HCT116 (cell line): ENCODE measurements at regions of chr6 and their contacts with region 1.

Region 1: GRCh38 chr6:42879372-42880239 is at the start of gene RPL7L1:
- DNase-seq: peak; percentile 83
- ATAC-seq: peak; percentile 90
- H3K4me3 ChIP-seq: peak within 1 kb of the TSS; percentile 86 to 99
- H3K27ac ChIP-seq: peak within 1 kb of the TSS; percentile 79
- H3K4me1 ChIP-seq: peaks cover 0 to 18% of the 10 kb centered on the region in 2 experiments; a peak in 2 of 4 replicates
- H3K27me3 ChIP-seq: no peaks in the 10 kb centered on the region
- CTCF ChIP-seq: no peak
- POLR2A ChIP-seq: peak; percentile 63
- RAD21 ChIP-seq: no peak
- total RNA-seq, gene RPL7L1: 125 TPM

Region 2: GRCh38 chr6:42224222-42224989 is 655.2 kb before region 1 on chr6:
- CTCF ChIA-PET with region 1: no interaction called
- POLR2A ChIA-PET with region 1: no interaction called
- RAD21 ChIA-PET with region 1: no interaction called
- intact Hi-C with region 1: loop called (anchors 10 kb)
- DNase-seq: peak; percentile 97
- ATAC-seq: peak; percentile 62
- H3K4me3 ChIP-seq: peak overlapping the region; percentile 23 to 42
- H3K27ac ChIP-seq: peak overlapping the region; percentile 84
- H3K4me1 ChIP-seq: peaks cover 48 to 85% of the 10 kb centered on the region in 2 experiments
- H3K27me3 ChIP-seq: no peaks in the 10 kb centered on the region
- CTCF ChIP-seq: no peak
- POLR2A ChIP-seq: no peak
- RAD21 ChIP-seq: peak; percentile 23

Region 3: DNA sequence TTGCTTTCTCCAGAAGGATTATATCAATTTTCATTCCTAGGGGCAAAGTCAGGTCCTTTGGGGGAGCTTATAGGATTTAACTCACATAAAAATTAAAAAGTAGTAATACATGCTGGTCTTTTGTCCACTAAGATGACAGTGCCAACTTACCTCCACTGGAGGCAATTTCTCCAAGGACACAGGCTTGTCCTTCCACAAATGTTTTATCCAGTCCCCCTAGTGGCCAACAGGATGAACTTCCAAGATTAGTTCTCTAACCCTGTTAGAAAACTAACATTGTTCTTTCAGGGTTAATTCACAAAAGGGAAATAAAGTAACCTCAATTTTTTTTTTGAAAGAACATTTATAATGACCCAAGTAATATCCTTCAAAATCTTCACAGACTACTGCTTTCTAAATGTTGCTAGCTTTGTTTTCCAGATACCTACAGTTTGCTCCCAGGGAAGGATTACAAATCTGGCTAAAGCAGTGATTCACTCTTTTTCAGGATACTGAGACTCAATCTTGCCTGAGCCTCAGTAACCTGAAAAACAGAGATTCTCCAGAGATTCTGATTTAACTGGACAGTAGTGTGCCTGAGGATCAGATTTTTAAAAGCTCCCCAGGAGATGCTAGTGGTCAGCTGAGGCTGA is 347.5 kb before region 1 on chr6:
- CTCF ChIA-PET with region 1: no interaction called
- POLR2A ChIA-PET with region 1: no interaction called
- RAD21 ChIA-PET with region 1: no interaction called
- intact Hi-C with region 1: loop called (anchors 1 kb)
- DNase-seq: peak; percentile 79
- ATAC-seq: peak; percentile 96
- H3K4me3 ChIP-seq: no peak overlapping the region
- H3K27ac ChIP-seq: no peak overlapping the region
- H3K4me1 ChIP-seq: no peaks in the 10 kb centered on the region
- H3K27me3 ChIP-seq: no peaks in the 10 kb centered on the region
- CTCF ChIP-seq: peak; percentile 85 to 95 (median 93)
- POLR2A ChIP-seq: no peak
- RAD21 ChIP-seq: peak; percentile 81

Region 4: GRCh38 chr6:42661540-42662153 is 218.0 kb before region 1 on chr6:
- CTCF ChIA-PET with region 1: interaction called, 19 read pairs
- POLR2A ChIA-PET with region 1: interaction called, 3 read pairs
- RAD21 ChIA-PET with region 1: no interaction called
- intact Hi-C with region 1: loop called (anchors 1 kb)
- DNase-seq: peak; percentile 50
- ATAC-seq: peak; percentile 88
- H3K4me3 ChIP-seq: no peak overlapping the region
- H3K27ac ChIP-seq: no peak overlapping the region
- H3K4me1 ChIP-seq: peaks cover 0 to 2% of the 10 kb centered on the region in 2 experiments; a peak in 2 of 4 replicates
- H3K27me3 ChIP-seq: no peaks in the 10 kb centered on the region
- CTCF ChIP-seq: peak; percentile 81 to 94 (median 87); a peak in 5 of 6 replicates
- POLR2A ChIP-seq: no peak
- RAD21 ChIP-seq: peak; percentile 92

Region 5: DNA sequence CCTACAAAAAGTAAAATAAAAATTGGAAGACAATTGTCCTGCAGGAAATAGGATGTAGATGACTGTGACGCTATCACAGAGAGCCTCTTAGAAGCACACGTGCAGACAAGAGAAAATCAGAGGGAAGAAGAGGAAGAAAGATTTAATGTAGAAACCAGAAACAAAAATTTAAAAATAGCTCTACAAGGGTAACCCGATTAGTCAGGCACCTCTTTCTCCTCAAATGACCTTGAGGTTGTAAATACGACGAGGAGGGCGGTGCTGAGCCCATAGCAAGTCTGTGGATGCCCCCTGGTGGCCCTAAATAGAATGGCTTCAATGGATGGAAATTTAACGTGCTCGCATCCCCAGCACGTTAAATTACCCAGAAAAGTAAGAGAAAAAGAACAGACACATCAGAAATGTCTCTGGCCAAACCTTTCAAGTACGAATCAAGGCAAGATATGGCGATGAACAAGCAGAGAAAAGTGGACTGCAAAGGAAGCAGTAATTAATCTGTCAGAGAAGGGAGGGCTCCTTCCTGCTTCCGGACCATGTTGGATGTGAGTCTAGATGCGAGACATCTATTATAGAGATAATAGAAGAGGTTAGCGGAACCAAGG is 153.0 kb before region 1 on chr6:
- CTCF ChIA-PET with region 1: no interaction called
- POLR2A ChIA-PET with region 1: interaction called, 3 read pairs
- RAD21 ChIA-PET with region 1: no interaction called
- intact Hi-C with region 1: loop called (anchors 5 kb)
- DNase-seq: peak; percentile 75
- ATAC-seq: peak; percentile 93
- H3K4me3 ChIP-seq: no peak overlapping the region
- H3K27ac ChIP-seq: no peak overlapping the region
- H3K4me1 ChIP-seq: peaks cover 4 to 9% of the 10 kb centered on the region in 2 experiments; a peak in 3 of 4 replicates
- H3K27me3 ChIP-seq: no peaks in the 10 kb centered on the region
- CTCF ChIP-seq: peak; percentile 87 to 94 (median 90)
- POLR2A ChIP-seq: no peak
- RAD21 ChIP-seq: peak; percentile 98

Region 6: DNA sequence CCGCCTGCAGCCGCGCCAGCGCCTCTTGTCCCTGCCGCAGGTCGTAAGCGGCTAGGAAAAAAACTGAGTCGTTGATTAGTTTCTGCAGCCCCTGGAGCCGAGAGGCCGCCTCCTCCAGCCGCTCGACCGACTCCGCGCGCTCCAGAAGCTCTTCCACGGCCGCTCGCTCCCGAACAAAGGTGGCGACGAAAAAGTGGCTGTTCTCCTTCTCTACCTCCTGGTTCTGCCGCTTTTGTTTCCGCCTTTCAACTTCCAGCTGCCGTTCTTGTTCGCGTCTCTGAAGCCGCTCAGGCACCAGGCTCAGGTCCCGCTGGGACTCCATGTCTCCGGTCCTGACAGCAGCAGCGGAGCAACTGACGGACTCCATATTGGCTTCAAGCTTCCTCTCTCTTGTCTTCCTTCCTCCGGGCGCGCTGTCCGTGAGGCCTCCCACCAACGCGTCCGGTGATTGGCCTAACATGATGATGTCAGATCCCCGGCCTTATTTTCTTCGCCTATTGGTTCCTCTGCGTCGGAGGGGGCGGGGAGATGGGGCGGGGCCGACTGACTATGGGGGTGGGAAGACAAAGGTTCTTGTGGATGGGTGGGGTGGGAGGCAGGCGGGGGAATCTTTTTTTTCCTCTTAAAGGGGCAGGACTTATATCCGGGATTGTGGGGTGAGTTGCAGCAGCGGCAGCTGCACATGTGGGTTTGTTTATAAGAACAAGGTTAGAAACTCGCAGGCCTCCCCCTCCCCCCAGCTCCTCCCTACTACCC is 133.7 kb before region 1 on chr6 and contains the start of gene TBCC:
- CTCF ChIA-PET with region 1: no interaction called
- POLR2A ChIA-PET with region 1: interaction called, 15 read pairs
- RAD21 ChIA-PET with region 1: interaction called, 3 to 10 read pairs
- intact Hi-C with region 1: loop called (anchors 1 kb)
- DNase-seq: peak; percentile 95
- ATAC-seq: peak; percentile 79
- H3K4me3 ChIP-seq: peak within 1 kb of the TSS; percentile 88 to 99
- H3K27ac ChIP-seq: peak within 1 kb of the TSS; percentile 79
- H3K4me1 ChIP-seq: peaks cover 11 to 28% of the 10 kb centered on the region in 2 experiments
- H3K27me3 ChIP-seq: no peaks in the 10 kb centered on the region
- CTCF ChIP-seq: no peak
- POLR2A ChIP-seq: peak; percentile 87
- RAD21 ChIP-seq: no peak
- total RNA-seq, gene TBCC: 17.1 TPM

Region 7: DNA sequence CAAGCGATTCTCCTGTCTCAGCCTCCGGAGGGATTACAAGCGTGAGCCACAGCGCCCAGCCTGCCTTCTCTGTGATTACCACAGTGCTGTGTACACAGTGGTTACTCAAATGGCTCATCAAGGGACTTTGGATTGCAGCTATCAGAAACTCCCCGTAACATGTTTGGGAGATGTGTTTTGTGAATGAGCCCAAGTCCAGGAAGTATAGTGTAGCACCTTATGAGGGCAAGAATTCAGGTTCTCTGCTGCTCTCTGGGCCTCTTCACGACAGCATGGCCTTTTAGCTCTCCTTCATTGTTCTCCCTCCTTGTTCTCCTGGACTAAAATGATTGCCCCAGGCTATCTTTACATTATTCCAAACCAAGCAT is 34.3 kb before region 1 on chr6:
- CTCF ChIA-PET with region 1: no interaction called
- POLR2A ChIA-PET with region 1: no interaction called
- RAD21 ChIA-PET with region 1: no interaction called
- intact Hi-C with region 1: no loop called
- DNase-seq: no peak
- ATAC-seq: no peak
- H3K4me3 ChIP-seq: no peak overlapping the region
- H3K27ac ChIP-seq: no peak overlapping the region
- H3K4me1 ChIP-seq: no peaks in the 10 kb centered on the region
- H3K27me3 ChIP-seq: no peaks in the 10 kb centered on the region
- CTCF ChIP-seq: no peak
- POLR2A ChIP-seq: no peak
- RAD21 ChIP-seq: no peak

Region 8: DNA sequence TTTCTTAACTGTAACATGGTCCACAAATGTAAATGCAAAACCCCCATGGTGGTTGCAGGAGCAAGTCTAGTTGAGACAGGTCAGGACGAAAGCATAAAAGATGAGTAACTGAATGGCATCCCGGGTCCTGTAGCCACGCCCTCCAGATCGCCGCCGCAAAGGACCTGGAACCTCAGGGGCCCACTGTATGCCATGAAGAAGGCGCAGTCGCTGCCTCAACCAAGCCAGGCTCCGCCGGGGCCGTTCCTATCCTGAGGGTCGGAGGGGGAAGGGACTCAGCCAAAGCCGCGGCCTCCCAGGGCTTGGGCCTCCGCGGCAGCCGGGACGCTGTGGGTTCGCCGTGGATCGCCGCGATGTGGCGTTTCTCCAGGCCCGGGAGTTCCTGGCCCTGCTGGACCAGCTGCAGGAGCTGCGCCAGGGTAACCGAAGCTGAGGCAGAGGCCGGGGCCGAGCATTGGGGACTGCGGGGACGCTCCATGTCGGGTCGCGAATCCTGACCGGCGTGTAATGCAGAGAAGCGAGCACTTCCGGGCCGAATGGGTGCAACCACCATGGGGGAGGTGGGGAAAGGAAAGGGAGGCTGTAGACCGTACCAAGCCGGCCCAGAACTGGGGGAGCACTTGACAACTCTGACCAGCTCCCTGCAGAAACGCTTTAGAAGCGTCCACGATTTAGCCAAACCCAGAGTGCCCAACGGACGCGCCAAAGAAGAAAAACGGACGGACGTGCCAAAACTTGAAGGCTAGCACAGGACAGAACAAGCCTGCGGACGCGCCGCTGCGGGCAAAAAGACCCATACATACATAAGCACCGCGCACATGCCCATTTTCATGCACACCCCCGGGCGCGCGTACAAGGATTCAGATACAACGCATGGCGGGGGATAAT is 10.9 kb after region 1 on chr6:
- CTCF ChIA-PET with region 1: no interaction called
- POLR2A ChIA-PET with region 1: interaction called, 10 read pairs
- RAD21 ChIA-PET with region 1: no interaction called
- intact Hi-C with region 1: no loop called
- DNase-seq: peak; percentile 89
- ATAC-seq: peak; percentile 90
- H3K4me3 ChIP-seq: peak overlapping the region; percentile 87 to 93
- H3K27ac ChIP-seq: peak overlapping the region; percentile 98
- H3K4me1 ChIP-seq: peaks cover 3 to 18% of the 10 kb centered on the region in 2 experiments; a peak in 3 of 4 replicates
- H3K27me3 ChIP-seq: no peaks in the 10 kb centered on the region
- CTCF ChIP-seq: no peak
- POLR2A ChIP-seq: peak; percentile 60
- RAD21 ChIP-seq: no peak

Region 9: GRCh38 chr6:44712353-44713111 is 1832.9 kb after region 1 on chr6:
- CTCF ChIA-PET with region 1: no interaction called
- POLR2A ChIA-PET with region 1: no interaction called
- RAD21 ChIA-PET with region 1: no interaction called
- intact Hi-C with region 1: no loop called
- DNase-seq: no peak
- ATAC-seq: no peak
- H3K4me3 ChIP-seq: no peak overlapping the region
- H3K27ac ChIP-seq: no peak overlapping the region
- H3K4me1 ChIP-seq: no peaks in the 10 kb centered on the region
- H3K27me3 ChIP-seq: no peaks in the 10 kb centered on the region
- CTCF ChIP-seq: no peak
- POLR2A ChIP-seq: no peak
- RAD21 ChIP-seq: no peak